ENCODE measurements at regions of chr4 and their contacts with region 1.

Region 1: DNA sequence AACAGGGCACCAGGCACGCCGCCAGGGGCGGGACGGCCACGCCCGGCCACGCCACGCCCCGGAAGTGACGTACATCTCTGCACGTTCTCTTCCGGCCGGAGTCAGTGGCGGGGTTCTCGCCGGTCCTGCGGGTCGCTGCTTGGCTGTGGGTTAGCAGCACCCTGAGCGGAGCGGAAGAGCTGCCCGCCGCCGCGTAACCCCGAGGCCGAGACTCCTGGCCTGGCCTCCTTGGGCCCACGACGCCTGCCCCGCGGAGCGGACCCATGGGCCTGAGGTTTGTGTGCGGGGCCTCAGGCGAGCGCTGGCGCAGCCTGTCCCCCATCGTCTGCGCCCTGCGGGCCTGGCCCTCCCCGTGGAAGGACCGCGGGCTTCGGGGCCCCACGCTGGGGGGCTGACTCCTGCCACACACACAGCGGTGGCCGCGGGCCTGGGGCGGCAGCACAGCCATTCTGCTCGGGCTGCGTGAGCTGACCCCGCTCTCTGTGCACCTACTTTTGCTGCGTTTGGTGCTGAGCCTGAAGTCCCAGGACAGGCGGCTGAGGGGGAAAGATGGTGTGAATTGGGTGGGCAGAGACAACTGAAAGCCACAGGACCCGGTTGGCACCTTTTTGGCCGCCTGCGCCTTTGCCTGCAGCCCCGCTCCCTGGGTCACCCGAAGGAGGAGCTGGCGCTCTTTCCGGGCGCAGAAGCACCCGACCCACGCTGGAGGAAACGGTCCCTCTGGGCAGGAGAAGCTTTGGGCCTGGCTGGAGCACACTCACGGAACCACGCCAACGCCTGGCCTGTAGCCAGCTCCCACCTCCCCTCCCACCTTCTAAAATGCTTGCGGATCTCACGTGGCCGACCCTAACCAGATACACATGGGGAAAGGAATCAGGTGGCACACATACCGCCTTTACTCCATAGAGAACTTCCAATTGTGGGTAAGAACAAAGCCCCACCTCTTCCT is 28.1 kb downstream of the NOP14 start:
- DNase-seq: peak; percentile 97
- ATAC-seq: peak; percentile 54
- H3K4me3 ChIP-seq: peak overlapping the region; percentile 8 to 96 (median 80)
- H3K4me3 Mint-ChIP-seq: peak overlapping the region; percentile 89
- H3K27ac ChIP-seq: peak overlapping the region; percentile 55 to 87
- H3K27ac Mint-ChIP-seq: peak overlapping the region; percentile 87
- H3K4me1 ChIP-seq: peaks cover 39 to 63% of the 10 kb centered on the region in 2 donors
- H3K4me1 Mint-ChIP-seq: peaks cover 55% of the 10 kb centered on the region
- H3K27me3 ChIP-seq: no peaks in the 10 kb centered on the region
- H3K27me3 Mint-ChIP-seq: no peaks in the 10 kb centered on the region
- CTCF ChIP-seq: no peak

Region 2: DNA sequence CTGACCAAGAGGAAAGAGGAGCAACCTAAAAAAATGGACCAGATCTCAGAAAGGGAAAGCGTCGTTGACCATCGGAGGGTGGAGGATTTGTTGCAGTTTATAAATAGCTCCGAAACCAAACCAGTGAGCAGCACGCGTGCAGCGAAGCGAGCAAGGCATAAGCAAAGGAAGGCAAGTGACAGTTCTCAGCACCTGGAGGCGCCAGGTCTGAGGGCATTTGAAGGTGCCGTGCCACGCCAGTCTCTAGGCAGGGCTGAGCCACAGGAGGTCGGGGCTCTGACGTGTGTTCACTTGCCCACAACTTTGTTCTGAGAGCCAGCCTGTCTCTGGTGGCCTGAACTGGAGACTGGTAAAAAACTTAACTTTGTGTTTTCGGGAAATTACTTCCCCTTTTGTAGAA is 238.7 kb before region 1 on chr4:
- CTCF ChIA-PET with region 1: no interaction called
- POLR2A ChIA-PET with region 1: no interaction called
- intact Hi-C with region 1: loop called (anchors 5 kb)
- DNase-seq: peak; percentile 93
- ATAC-seq: peak; percentile 96
- H3K4me3 ChIP-seq: peak overlapping the region; percentile 17 to 69 (median 35)
- H3K4me3 Mint-ChIP-seq: peak overlapping the region; percentile 78
- H3K27ac ChIP-seq: peak overlapping the region; percentile 85 to 87
- H3K27ac Mint-ChIP-seq: peak overlapping the region; percentile 93
- H3K4me1 ChIP-seq: peaks cover 47 to 55% of the 10 kb centered on the region in 2 donors
- H3K4me1 Mint-ChIP-seq: peaks cover 55% of the 10 kb centered on the region
- H3K27me3 ChIP-seq: no peaks in the 10 kb centered on the region
- H3K27me3 Mint-ChIP-seq: no peaks in the 10 kb centered on the region
- CTCF ChIP-seq: no peak

Region 3: GRCh38 chr4:2755837-2756694 is 179.0 kb before region 1 on chr4 and contains the start of gene TNIP2:
- CTCF ChIA-PET with region 1: no interaction called
- POLR2A ChIA-PET with region 1: no interaction called
- intact Hi-C with region 1: loop called (anchors 2 kb)
- DNase-seq: peak; percentile 88
- ATAC-seq: peak; percentile 86
- H3K4me3 ChIP-seq: peak within 1 kb of the TSS in 4 of 5 experiments; percentile 61 to 78 (median 68)
- H3K4me3 Mint-ChIP-seq: peak within 1 kb of the TSS; percentile 83
- H3K27ac ChIP-seq: peak within 1 kb of the TSS; percentile 38 to 83
- H3K27ac Mint-ChIP-seq: peak within 1 kb of the TSS; percentile 79
- H3K4me1 ChIP-seq: peaks cover 11 to 21% of the 10 kb centered on the region in 2 donors
- H3K4me1 Mint-ChIP-seq: peaks cover 31% of the 10 kb centered on the region
- H3K27me3 ChIP-seq: no peaks in the 10 kb centered on the region
- H3K27me3 Mint-ChIP-seq: no peaks in the 10 kb centered on the region
- CTCF ChIP-seq: peak; percentile 31
- total RNA-seq, gene TNIP2: 47.6 and 51.0 TPM in 2 replicates

Region 4: DNA sequence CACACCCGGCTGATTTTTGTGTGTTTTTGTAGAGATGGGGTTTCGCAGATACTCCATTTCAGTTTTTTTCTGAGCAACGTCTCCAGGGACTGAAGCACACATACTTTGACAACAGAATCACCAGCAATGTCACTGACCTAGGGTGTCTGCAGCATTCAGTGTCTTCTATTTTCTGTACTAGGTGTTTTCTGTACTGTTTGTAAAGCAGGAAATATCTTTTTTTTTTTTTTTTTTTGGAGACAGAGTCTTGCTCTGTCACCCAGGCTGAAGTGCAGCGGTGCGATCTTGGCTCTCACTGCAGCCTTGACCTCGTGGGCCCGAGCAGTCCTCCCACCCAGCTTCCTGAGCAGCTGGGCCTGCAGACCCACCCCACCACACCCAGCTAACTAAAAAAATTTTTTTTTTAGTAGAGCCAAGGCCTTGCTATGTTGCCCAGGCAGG is 82.6 kb before region 1 on chr4:
- CTCF ChIA-PET with region 1: no interaction called
- POLR2A ChIA-PET with region 1: no interaction called
- intact Hi-C with region 1: loop called (anchors 5 kb)
- DNase-seq: peak; percentile 87
- ATAC-seq: peak; percentile 83
- H3K4me3 ChIP-seq: peak overlapping the region; percentile 8 to 48 (median 23)
- H3K4me3 Mint-ChIP-seq: peak overlapping the region; percentile 76
- H3K27ac ChIP-seq: peak overlapping the region; percentile 72 to 81
- H3K27ac Mint-ChIP-seq: peak overlapping the region; percentile 79
- H3K4me1 ChIP-seq: peaks cover 88% of the 10 kb centered on the region in 2 donors
- H3K4me1 Mint-ChIP-seq: peaks cover 76% of the 10 kb centered on the region
- H3K27me3 ChIP-seq: no peaks in the 10 kb centered on the region
- H3K27me3 Mint-ChIP-seq: no peaks in the 10 kb centered on the region
- CTCF ChIP-seq: no peak

Region 5: GRCh38 chr4:2867758-2868491 is 67.2 kb before region 1 on chr4:
- CTCF ChIA-PET with region 1: no interaction called
- POLR2A ChIA-PET with region 1: no interaction called
- intact Hi-C with region 1: no loop called
- DNase-seq: no peak
- ATAC-seq: no peak
- H3K4me3 ChIP-seq: no peak overlapping the region
- H3K4me3 Mint-ChIP-seq: no peak overlapping the region
- H3K27ac ChIP-seq: peak overlapping the region in 1 of 2 donors; percentile 18
- H3K27ac Mint-ChIP-seq: peak overlapping the region; percentile 10
- H3K4me1 ChIP-seq: peaks cover 49 to 76% of the 10 kb centered on the region in 2 donors
- H3K4me1 Mint-ChIP-seq: peaks cover 80% of the 10 kb centered on the region
- H3K27me3 ChIP-seq: no peaks in the 10 kb centered on the region
- H3K27me3 Mint-ChIP-seq: no peaks in the 10 kb centered on the region
- CTCF ChIP-seq: no peak

Region 6: GRCh38 chr4:2981256-2981819 is 46.3 kb after region 1 on chr4:
- CTCF ChIA-PET with region 1: no interaction called
- POLR2A ChIA-PET with region 1: no interaction called
- intact Hi-C with region 1: no loop called
- DNase-seq: no peak
- ATAC-seq: no peak
- H3K4me3 ChIP-seq: no peak overlapping the region
- H3K4me3 Mint-ChIP-seq: no peak overlapping the region
- H3K27ac ChIP-seq: no peak overlapping the region
- H3K27ac Mint-ChIP-seq: no peak overlapping the region
- H3K4me1 ChIP-seq: peaks cover 0 to 2% of the 10 kb centered on the region in 2 donors
- H3K4me1 Mint-ChIP-seq: peaks cover 1% of the 10 kb centered on the region
- H3K27me3 ChIP-seq: peaks cover 0 to 2% (median 0%) of the 10 kb centered on the region in 4 experiments
- H3K27me3 Mint-ChIP-seq: no peaks in the 10 kb centered on the region
- CTCF ChIP-seq: no peak

Measured in B cell (primary cell).